PC-3 (cell line): ENCODE measurements at regions of chr16 and their contacts with region 1.

Region 1: DNA sequence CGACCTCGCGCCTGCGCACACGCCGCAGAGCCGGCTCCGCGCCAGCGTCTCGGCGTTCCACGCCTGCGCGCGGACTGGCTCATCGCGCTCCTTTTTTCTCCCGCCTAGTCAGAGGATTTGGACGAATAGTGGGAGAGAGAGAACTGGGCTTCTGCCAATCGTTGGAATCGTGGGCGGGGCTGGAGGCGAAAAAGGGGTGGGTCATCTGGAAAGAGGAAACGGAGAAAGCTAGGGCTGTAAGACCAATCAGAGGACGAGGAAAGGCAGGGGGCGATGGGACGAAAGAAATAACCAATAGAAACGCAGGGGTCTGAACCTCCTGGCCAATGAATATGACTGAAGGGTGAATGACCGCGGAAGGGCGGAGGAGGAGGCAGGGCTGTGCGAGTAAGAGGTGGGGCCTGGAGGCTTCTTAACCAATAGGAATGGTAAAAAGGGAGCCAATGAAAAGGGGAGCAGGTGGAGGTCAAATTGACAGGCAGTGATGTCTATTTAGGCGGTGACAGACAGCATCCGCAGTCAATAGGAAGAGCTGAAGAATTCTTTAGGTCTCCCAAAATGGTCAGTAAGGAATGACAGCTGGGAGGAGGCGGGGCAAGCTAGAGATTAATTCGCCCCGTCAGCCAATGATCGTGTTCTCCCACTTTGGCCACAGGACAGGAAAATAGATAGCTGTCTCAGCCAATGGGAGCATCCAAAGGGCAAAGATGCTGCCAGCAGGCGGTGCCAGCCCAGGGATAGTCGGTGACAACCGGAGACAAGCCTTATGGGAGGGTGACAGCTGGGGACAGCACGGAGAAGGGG is at the start of gene TBC1D10B:
- DNase-seq: peak; percentile 99
- ATAC-seq: peak; percentile 78
- H3K4me3 ChIP-seq: peak within 1 kb of the TSS; percentile 94
- H3K27ac ChIP-seq: no peak within 1 kb of the TSS; the same call in 1 of the 2 replicates
- H3K4me1 ChIP-seq: peaks cover 21% of the 10 kb centered on the region
- H3K27me3 ChIP-seq: no peaks in the 10 kb centered on the region
- CTCF ChIP-seq: no peak; the same call in 1 of the 2 replicates
- total RNA-seq, gene TBC1D10B: 36.0 and 52.4 TPM in 2 replicates

Region 2: DNA sequence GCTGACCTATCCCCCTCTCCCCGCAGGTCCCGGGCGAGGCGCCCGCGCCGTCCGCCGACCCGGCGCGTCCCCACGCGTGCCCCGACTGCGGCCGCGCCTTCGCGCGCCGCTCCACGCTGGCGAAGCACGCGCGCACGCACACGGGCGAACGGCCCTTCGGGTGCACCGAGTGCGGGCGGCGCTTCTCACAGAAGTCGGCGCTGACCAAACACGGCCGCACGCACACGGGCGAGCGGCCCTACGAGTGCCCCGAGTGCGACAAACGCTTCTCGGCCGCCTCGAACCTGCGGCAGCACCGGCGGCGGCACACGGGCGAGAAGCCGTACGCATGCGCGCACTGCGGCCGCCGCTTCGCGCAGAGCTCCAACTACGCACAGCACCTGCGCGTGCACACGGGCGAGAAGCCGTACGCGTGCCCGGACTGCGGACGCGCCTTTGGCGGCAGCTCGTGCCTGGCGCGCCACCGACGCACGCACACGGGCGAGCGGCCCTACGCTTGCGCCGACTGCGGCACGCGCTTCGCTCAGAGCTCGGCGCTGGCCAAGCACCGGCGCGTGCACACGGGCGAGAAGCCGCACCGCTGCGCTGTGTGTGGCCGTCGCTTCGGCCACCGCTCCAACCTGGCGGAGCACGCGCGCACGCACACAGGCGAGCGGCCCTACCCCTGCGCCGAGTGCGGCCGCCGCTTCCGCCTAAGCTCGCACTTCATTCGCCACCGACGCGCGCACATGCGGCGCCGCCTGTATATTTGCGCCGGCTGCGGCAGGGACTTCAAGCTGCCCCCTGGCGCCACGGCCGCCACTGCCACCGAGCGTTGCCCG is 47.1 kb after region 1 on chr16:
- CTCF ChIA-PET with region 1: no interaction called
- POLR2A ChIA-PET with region 1: interaction called, 10 read pairs
- intact Hi-C with region 1: no loop called
- DNase-seq: peak; percentile 94
- ATAC-seq: peak; percentile 94
- H3K4me3 ChIP-seq: peak overlapping the region; percentile 68
- H3K27ac ChIP-seq: no peak overlapping the region
- H3K4me1 ChIP-seq: peaks cover 6% of the 10 kb centered on the region; the same call in 1 of the 2 replicates
- H3K27me3 ChIP-seq: no peaks in the 10 kb centered on the region
- CTCF ChIP-seq: peak; percentile 33; the same call in 1 of the 2 replicates